Activated T-helper 2 cell treated with anti-CD3 and anti-CD28 coated beads, Interferon-gamma antibody, Interleukin-2, Interleukin-4, amounts not matched to agents 10 μg/mL and 5 μg/mL and 100 μg/mL, durations not matched to agents 14 hours and 24 hours and 36 hours (primary cell): ENCODE measurements at regions of chr15 and their contacts with region 1.

Region 1: DNA sequence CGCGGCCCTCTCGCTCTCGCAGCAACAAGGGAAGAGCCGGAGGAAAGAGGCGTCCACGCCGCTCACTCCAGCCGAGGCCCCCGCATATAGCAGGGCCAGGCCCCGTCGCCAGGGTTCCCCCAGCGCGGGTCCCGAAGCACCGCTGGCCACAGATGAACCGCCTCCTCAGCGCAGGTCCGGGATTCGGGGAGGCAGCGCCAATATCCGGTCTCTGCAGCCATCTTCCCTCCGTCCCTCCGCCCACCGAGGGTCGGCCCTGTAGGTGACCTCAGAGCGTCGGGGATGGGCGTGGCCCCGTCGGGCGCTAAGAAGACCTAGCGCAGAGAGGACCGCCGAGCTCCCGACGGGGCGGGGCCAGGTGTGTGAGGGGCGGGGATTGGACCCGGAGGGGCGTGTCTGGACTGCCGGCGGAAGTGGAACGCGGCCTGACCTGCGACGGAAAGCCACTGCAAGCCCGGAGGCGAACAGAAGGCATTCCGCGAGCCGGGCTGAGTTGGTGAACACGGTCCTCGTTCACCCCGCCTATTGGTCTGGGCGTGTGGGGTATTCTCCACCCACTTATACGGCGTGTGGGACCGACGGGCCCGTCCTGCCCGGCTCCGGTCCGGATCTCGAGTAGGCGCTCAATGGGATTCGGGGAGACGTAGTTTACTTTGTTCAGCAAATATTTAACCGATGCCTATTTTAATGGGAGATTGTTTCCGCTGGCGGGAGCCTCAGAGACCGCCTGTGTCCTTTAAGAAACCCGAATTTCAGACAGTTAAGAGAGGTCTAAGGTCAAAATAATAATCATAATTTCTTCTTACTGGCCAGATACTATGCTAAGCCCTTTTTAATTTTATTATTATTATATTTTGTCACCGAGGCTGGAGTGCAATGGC is 26.9 kb upstream of the MTHFS start:
- DNase-seq: peak; percentile 99
- H3K4me3 Mint-ChIP-seq: peak overlapping the region; percentile 87
- H3K27ac Mint-ChIP-seq: peak overlapping the region; percentile 95
- H3K4me1 Mint-ChIP-seq: peaks cover 15% of the 10 kb centered on the region
- H3K27me3 Mint-ChIP-seq: no peaks in the 10 kb centered on the region

Region 2: DNA sequence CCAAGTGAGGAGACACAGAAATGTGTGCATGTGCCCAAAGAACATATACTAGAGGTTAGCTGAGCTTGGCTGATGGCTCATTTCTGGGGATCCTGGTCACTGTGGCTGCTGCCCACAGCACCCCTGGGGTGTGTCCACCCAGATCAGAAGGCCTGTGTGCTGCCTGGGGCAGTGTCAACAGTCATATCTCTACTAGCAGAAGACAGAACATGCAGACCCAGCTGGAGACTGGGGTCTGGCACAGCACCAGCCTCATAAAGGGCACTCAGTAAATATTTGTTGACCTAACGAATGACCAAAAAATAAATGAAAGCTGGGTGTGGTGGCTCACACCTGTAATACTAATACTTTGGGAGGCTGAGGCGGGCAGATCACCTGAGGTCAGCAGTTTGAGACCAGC is 1319.3 kb before region 1 on chr15:
- intact Hi-C with region 1: no loop called
- DNase-seq: no peak
- H3K4me3 Mint-ChIP-seq: no peak overlapping the region
- H3K27ac Mint-ChIP-seq: no peak overlapping the region
- H3K4me1 Mint-ChIP-seq: no peaks in the 10 kb centered on the region
- H3K27me3 Mint-ChIP-seq: no peaks in the 10 kb centered on the region

Region 3: DNA sequence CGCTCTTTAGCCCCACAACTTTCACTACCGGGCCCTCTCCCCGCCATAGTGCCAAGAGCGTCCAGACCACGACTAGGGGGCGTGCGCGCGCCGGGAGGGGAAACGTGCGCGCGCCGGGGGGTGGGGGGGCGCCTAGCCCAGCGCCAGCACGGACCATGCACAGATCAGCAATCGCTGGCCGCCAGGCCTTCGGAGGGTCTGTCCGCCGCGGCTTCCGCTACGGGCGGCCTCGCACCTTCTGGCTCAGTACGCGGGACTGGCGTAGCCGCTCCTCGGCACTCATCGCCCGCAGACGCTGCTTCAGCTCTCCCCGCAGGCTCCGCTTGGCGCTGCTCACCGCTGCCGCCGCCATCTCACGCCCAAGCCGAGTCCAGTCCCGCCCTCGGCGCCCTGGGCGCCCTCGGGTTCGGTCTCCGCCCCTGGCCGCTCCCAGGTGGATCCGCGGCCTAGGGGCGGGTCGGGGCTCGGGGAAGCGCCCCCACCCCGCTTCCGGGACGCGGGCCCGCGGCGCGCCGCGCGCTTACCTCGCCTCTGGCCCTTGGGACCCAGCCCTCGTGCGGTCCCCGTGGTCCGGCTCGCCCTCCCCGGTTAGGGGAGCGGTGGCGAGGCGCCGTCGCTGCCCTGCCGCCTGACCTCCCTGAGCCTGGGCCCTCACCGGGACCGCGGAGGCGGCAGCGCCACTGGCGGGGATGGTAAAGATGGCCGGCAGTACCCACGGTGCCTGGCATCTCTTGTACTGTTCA is 26.9 kb before region 1 on chr15 and contains the start of gene MTHFS:
- intact Hi-C with region 1: loop called (anchors 1 kb)
- DNase-seq: peak; percentile 77
- H3K4me3 Mint-ChIP-seq: peak within 1 kb of the TSS; percentile 98
- H3K27ac Mint-ChIP-seq: peak within 1 kb of the TSS; percentile 99
- H3K4me1 Mint-ChIP-seq: peaks cover 47% of the 10 kb centered on the region
- H3K27me3 Mint-ChIP-seq: no peaks in the 10 kb centered on the region
- total RNA-seq, gene MTHFS: 33.3 and 34.6 TPM in 2 replicates